H1 (cell line): ENCODE measurements at regions of chr17 and their contacts with region 1.

Region 1: GRCh38 chr17:1590031-1590748 is 27.6 kb upstream of the PITPNA start:
- DNase-seq: no peak
- H3K4me3 ChIP-seq: no peak overlapping the region
- H3K27ac ChIP-seq: no peak overlapping the region
- H3K4me1 ChIP-seq: peaks cover 0 to 14% (median 8%) of the 10 kb centered on the region in 4 experiments; a peak in 6 of 7 replicates
- H3K27me3 ChIP-seq: no peaks in the 10 kb centered on the region
- CTCF ChIP-seq: no peak
- EP300 ChIP-seq: no peak
- POLR2A ChIP-seq: no peak
- RAD21 ChIP-seq: no peak

Region 2: GRCh38 chr17:1639549-1640343 is 49.6 kb after region 1 on chr17:
- CTCF ChIA-PET with region 1: interaction called, 3 read pairs
- POLR2A ChIA-PET with region 1: interaction called, 11 read pairs
- DNase-seq: no peak
- H3K4me3 ChIP-seq: no peak overlapping the region
- H3K27ac ChIP-seq: no peak overlapping the region
- H3K4me1 ChIP-seq: peaks cover 0 to 30% (median 14%) of the 10 kb centered on the region in 4 experiments; a peak in 5 of 7 replicates
- H3K27me3 ChIP-seq: peaks cover 0 to 13% (median 6%) of the 10 kb centered on the region in 4 experiments; a peak in 5 of 7 replicates
- CTCF ChIP-seq: no peak
- EP300 ChIP-seq: no peak
- POLR2A ChIP-seq: no peak
- RAD21 ChIP-seq: no peak

Region 3: DNA sequence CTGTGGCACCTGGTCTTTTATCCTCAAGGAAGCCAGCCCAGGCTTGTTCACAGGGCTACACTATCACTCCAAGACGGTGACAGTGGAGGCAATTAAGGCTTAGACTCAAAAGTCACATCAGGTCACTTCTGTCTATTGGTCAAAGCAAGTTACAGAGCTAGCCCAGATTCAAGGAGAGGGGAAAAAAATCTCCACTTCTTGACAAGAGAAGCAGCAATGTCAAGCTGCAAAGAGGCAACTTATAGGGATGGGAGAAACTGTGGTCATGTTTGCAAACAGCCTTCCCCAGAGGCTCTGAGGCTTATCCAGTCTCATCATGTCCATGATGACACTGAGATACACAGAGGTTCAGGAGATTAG is 203.2 kb after region 1 on chr17:
- CTCF ChIA-PET with region 1: no interaction called
- POLR2A ChIA-PET with region 1: no interaction called
- DNase-seq: no peak
- H3K4me3 ChIP-seq: no peak overlapping the region
- H3K27ac ChIP-seq: no peak overlapping the region
- H3K4me1 ChIP-seq: no peaks in the 10 kb centered on the region
- H3K27me3 ChIP-seq: no peaks in the 10 kb centered on the region
- CTCF ChIP-seq: no peak
- EP300 ChIP-seq: no peak
- POLR2A ChIP-seq: no peak
- RAD21 ChIP-seq: no peak